T-cell (primary cell): ENCODE measurements at regions of chr9 and their contacts with region 1.

Region 1: DNA sequence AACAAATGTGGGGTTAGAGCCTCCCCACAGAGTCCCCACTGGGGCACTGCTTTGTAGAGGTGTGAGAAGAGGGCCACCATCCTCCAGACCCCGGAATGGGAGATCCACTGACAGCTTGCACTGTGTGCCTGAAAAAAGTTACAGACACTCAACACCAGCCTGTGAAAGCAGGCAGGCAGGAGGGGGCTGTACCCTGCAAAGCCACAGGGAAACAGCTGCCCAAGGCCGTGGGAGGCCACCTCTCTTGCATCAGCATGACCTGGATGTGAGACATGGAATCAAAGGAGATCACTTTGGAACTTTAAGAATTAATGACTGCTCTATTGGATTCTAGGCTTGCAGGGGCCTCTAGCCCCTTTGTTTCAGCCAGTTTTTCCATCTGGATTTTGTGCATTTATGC is 782.3 kb downstream of the BRINP1 start:
- DNase-seq: no peak
- ATAC-seq: no peak
- H3K4me3 ChIP-seq: no peak overlapping the region
- H3K4me3 Mint-ChIP-seq: no peak overlapping the region
- H3K27ac ChIP-seq: no peak overlapping the region
- H3K27ac Mint-ChIP-seq: no peak overlapping the region
- H3K4me1 ChIP-seq: no peaks in the 10 kb centered on the region
- H3K4me1 Mint-ChIP-seq: no peaks in the 10 kb centered on the region
- H3K27me3 ChIP-seq: no peaks in the 10 kb centered on the region
- H3K27me3 Mint-ChIP-seq: no peaks in the 10 kb centered on the region

Region 2: DNA sequence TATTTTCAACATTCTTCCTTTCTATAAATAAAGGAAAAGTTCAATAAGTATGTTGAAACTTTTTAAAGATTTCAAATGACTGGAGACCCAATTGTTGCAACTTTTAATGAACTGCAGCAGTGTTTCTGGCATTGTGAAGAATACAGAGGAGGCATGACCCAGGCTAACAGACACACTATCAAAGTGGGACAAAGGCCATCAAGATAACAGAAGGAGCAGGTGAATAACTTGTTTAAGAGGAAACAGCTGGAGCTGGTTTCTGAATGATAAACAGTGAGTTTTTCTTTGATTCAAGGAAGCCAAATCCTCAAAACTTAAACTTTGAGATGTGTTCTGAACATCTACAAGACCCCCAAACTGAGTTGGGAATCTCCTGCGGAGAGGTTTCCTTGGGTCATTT is 148.2 kb before region 1 on chr9:
- CTCF ChIA-PET with region 1: no interaction called
- POLR2A ChIA-PET with region 1: no interaction called
- DNase-seq: no peak
- ATAC-seq: no peak
- H3K4me3 ChIP-seq: no peak overlapping the region
- H3K4me3 Mint-ChIP-seq: no peak overlapping the region
- H3K27ac ChIP-seq: no peak overlapping the region
- H3K27ac Mint-ChIP-seq: no peak overlapping the region
- H3K4me1 ChIP-seq: no peaks in the 10 kb centered on the region
- H3K4me1 Mint-ChIP-seq: no peaks in the 10 kb centered on the region
- H3K27me3 ChIP-seq: no peaks in the 10 kb centered on the region
- H3K27me3 Mint-ChIP-seq: no peaks in the 10 kb centered on the region

Region 3: DNA sequence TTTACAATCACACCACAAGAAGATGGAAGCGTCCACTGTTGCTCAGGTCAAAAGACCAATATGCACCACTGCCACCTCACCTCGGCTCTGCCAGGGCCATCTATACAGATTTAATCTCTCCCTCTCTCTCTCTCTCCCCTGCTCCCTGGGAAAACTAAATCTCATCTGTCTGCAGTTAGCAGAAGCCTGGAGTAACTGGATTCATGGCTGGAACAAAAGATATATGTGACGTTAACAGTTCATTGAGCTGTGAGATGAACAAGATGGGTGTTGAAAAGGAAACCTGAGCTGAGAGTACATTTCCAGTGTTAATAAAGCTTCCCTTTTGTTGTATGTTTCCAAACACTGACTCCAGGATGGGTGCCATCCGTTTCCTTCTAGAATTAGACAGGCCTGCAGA is 1623.3 kb after region 1 on chr9:
- CTCF ChIA-PET with region 1: no interaction called
- POLR2A ChIA-PET with region 1: interaction called in 1 of 2 experiments, 11 read pairs
- DNase-seq: no peak
- ATAC-seq: no peak
- H3K4me3 ChIP-seq: no peak overlapping the region
- H3K4me3 Mint-ChIP-seq: no peak overlapping the region
- H3K27ac ChIP-seq: no peak overlapping the region
- H3K27ac Mint-ChIP-seq: no peak overlapping the region
- H3K4me1 ChIP-seq: no peaks in the 10 kb centered on the region
- H3K4me1 Mint-ChIP-seq: no peaks in the 10 kb centered on the region
- H3K27me3 ChIP-seq: no peaks in the 10 kb centered on the region
- H3K27me3 Mint-ChIP-seq: peaks cover 3 to 14% of the 10 kb centered on the region in 2 donors